Head of caudate nucleus (tissue), 42 donors: ENCODE measurements at regions of chr21 and their contacts with region 1.

Region 1: GRCh38 chr21:31107871-31108270 is 69.6 kb upstream of the KRTAP19-8 start:
- DNase-seq: no peak

Region 2: DNA sequence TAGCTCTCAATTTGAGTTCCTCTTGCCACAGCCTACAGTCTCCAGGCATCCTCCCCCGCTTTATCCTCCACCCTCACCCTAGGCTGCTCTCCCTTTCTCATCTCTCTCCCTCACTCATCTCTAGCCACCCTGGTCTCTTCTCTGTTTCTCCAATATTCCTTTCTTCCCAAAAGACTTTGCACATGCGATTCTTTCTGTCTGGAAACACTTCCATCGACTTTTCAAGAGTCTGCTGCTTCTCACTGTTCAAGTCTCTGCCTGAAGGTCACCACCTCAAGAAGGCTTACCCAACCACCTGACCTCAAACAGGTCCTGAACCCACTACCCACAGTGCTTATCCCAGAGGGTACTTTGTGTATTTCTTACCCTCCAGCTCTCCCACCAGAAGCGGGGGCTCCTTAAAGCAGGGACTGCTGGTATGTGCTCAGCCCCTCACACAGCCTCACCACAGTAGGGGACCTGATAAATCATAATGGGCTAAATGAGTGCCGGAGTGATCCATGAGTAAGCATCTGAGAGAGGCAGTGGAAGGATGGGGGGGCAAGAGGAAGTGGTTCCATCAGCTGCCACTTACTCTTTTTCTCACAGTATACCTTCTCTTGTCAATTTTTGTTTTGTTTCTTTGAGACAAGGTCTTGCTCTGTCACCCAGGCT is 55.3 kb before region 1 on chr21:
- intact Hi-C with region 1: no loop called
- DNase-seq: no peak

Region 3: DNA sequence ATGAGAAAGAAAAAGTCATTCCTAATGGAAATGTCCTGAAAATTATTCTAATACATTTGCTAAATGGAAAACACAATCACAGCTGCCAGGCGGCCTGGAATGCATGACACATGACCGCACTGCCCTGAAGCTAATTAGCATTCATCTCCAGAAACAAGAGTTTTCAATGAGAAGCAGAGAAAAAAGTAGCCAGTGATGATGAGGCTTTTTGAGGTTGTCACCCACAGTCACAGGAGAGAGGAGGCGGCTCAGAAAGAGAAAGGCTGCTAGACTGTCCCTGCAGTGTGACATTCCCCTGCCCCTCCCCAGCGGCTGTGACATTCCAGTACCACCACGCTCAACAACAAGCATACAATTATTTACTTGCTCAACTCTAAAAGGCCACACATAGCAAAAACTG is 53.3 kb after region 1 on chr21:
- intact Hi-C with region 1: loop called (anchors 5 kb)
- DNase-seq: peak; percentile 35 to 85 (median 65)

Region 4: GRCh38 chr21:31180256-31181081 is 72.6 kb after region 1 on chr21:
- intact Hi-C with region 1: loop called (anchors 5 kb)
- DNase-seq: peak in 15 of 42 donors; percentile 22 to 80 (median 51)